PC-3 (cell line): ENCODE measurements at regions of chr3 and their contacts with region 1.

Region 1: DNA sequence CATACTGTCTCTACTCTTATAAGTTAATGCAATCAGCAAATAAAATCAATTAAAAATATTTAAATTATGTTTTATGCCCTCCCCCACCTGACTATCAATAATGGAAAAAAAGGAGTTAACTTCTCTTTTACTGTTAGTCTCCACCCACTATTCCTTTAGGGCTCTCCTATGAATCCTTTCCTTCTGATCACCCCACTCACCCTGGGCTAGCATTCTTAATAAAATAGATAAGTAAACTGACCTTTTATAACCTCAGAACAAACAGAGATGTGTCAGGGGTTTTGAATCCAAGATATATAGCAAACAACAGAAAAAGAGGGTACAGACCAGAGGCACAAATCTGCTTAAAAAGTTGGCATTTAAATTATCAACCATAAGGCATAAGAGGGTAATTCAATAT is 116.1 kb upstream of the PLXND1 start:
- DNase-seq: no peak
- ATAC-seq: no peak
- H3K4me3 ChIP-seq: no peak overlapping the region
- H3K27ac ChIP-seq: no peak overlapping the region
- H3K4me1 ChIP-seq: no peaks in the 10 kb centered on the region
- H3K27me3 ChIP-seq: no peaks in the 10 kb centered on the region
- CTCF ChIP-seq: no peak

Region 2: DNA sequence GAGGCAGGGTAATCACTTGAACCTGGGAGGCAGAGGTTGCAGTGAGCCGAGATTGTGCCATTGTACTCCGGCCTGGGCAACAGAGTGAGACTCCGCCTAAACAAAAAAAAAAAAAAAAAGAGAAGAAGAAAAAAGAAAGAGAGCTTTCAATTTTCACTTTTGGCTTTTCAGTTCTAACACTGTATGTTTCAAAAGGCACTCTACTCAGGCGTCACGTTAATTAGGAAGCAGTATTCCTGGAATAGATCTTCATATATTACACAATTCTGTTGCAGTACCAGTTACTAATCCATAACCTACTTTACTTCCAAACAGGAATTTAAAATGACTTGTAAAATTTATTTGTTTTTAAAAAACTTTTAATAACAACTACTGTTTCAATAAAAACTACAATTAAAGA is 15.6 kb after region 1 on chr3:
- CTCF ChIA-PET with region 1: no interaction called
- POLR2A ChIA-PET with region 1: interaction called, 14 read pairs
- intact Hi-C with region 1: no loop called
- DNase-seq: no peak
- ATAC-seq: no peak
- H3K4me3 ChIP-seq: no peak overlapping the region
- H3K27ac ChIP-seq: no peak overlapping the region
- H3K4me1 ChIP-seq: peaks cover 2% of the 10 kb centered on the region
- H3K27me3 ChIP-seq: no peaks in the 10 kb centered on the region
- CTCF ChIP-seq: no peak